CD8-positive, alpha-beta T cell (primary cell): ENCODE measurements at regions of chr6 and their contacts with region 1.

Region 1: DNA sequence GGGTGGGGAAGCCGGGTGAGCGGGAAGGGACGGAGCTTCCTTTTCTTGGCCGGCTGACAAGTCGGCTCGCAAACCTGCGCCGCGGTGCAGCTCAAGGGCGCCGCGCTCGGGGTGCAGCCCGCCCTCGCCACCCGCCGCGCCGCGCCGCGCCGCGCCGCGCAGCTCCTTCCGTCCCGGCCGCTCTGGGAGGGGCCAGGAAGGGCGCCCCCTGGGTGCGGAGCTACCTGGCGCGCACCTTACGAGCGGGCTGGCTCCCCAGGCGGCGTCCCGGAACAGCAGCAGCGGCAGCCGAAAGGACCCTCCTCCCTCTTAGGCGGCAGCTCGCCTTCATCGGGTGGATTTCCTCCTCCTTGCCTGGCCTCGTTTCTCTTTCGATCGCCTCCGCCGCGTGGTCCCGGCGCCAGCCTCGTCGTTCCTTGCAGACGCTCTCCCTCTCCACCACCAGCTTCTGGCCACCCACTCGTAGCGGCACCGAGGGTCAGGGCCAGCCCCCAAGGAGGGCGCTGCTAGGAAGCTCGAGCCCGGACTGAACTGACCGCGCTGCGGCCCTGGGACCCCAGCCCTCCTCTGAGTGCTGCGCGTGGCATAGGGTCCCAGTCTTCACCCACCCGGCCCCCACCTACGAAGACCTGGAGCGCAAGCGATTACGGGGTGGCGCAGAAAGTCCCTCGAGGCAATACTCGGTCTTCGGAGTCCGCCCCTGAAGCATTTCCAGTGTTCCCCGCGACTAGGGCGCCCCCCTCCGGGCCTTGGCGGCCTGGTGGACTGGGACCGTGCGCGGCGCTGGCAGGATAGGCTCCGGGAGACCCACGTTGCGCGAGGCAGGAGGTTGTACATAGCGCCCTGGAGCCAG is at the start of gene MAP3K5:
- DNase-seq: peak; percentile 92 to 98 (median 95)
- ATAC-seq: peak; percentile 80
- H3K4me3 ChIP-seq: peak within 1 kb of the TSS; percentile 98 to 99
- H3K4me3 Mint-ChIP-seq: peak within 1 kb of the TSS; percentile 94
- H3K27ac ChIP-seq: peak within 1 kb of the TSS; percentile 92 to 96
- H3K27ac Mint-ChIP-seq: peak within 1 kb of the TSS; percentile 96
- H3K4me1 ChIP-seq: peaks cover 36% of the 10 kb centered on the region
- H3K4me1 Mint-ChIP-seq: peaks cover 39% of the 10 kb centered on the region
- H3K27me3 ChIP-seq: no peaks in the 10 kb centered on the region
- H3K27me3 Mint-ChIP-seq: no peaks in the 10 kb centered on the region
- CTCF ChIP-seq: peak; percentile 72
- total RNA-seq, gene MAP3K5: 11.1 to 11.3 TPM

Region 2: GRCh38 chr6:135105710-135106109 is 1686.9 kb before region 1 on chr6:
- CTCF ChIA-PET with region 1: no interaction called
- POLR2A ChIA-PET with region 1: no interaction called
- intact Hi-C with region 1: no loop called
- DNase-seq: no peak
- ATAC-seq: no peak
- H3K4me3 ChIP-seq: no peak overlapping the region
- H3K4me3 Mint-ChIP-seq: no peak overlapping the region
- H3K27ac ChIP-seq: no peak overlapping the region
- H3K27ac Mint-ChIP-seq: peak overlapping the region; percentile 86
- H3K4me1 ChIP-seq: peaks cover 39% of the 10 kb centered on the region
- H3K4me1 Mint-ChIP-seq: peaks cover 64% of the 10 kb centered on the region
- H3K27me3 ChIP-seq: no peaks in the 10 kb centered on the region
- H3K27me3 Mint-ChIP-seq: no peaks in the 10 kb centered on the region
- CTCF ChIP-seq: no peak

Region 3: GRCh38 chr6:135497412-135498269 is 1295.0 kb before region 1 on chr6 and contains the start of gene AHI1:
- CTCF ChIA-PET with region 1: no interaction called
- POLR2A ChIA-PET with region 1: interaction called, 4 read pairs
- intact Hi-C with region 1: loop called in 1 of 2 experiments (anchors 5 kb)
- DNase-seq: peak; percentile 81 to 95 (median 86)
- ATAC-seq: peak; percentile 72
- H3K4me3 ChIP-seq: peak within 1 kb of the TSS; percentile 87 to 95
- H3K4me3 Mint-ChIP-seq: no peak within 1 kb of the TSS
- H3K27ac ChIP-seq: peak within 1 kb of the TSS; percentile 91 to 98
- H3K27ac Mint-ChIP-seq: no peak within 1 kb of the TSS
- H3K4me1 ChIP-seq: peaks cover 6% of the 10 kb centered on the region
- H3K4me1 Mint-ChIP-seq: peaks cover 8% of the 10 kb centered on the region
- H3K27me3 ChIP-seq: no peaks in the 10 kb centered on the region
- H3K27me3 Mint-ChIP-seq: no peaks in the 10 kb centered on the region
- CTCF ChIP-seq: no peak
- total RNA-seq, gene AHI1: 16.0 to 17.9 TPM

Region 4: DNA sequence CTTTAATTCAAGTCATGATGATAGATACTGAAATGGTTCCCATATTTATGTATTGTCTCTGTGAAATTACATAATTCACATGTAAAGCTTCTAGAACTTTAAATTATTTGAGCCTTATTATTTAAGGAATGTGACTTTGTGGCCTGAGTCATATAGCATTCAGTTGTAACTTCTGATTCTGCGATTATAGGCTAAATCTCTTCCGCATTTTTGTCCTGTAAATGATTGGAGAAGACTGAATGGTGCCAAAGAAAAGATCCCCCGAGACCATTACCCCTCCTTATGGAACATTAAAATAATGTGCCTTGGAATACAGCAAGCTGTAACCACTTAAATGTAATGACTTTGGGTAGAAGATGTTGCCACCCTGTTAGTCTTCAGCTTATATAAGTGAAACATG is 179.2 kb before region 1 on chr6:
- CTCF ChIA-PET with region 1: interaction called, 12 read pairs
- POLR2A ChIA-PET with region 1: no interaction called
- intact Hi-C with region 1: loop called (anchors 1 kb)
- DNase-seq: no peak
- ATAC-seq: no peak
- H3K4me3 ChIP-seq: no peak overlapping the region
- H3K4me3 Mint-ChIP-seq: no peak overlapping the region
- H3K27ac ChIP-seq: no peak overlapping the region
- H3K27ac Mint-ChIP-seq: no peak overlapping the region
- H3K4me1 ChIP-seq: no peaks in the 10 kb centered on the region
- H3K4me1 Mint-ChIP-seq: no peaks in the 10 kb centered on the region
- H3K27me3 ChIP-seq: no peaks in the 10 kb centered on the region
- H3K27me3 Mint-ChIP-seq: no peaks in the 10 kb centered on the region
- CTCF ChIP-seq: no peak

Region 5: DNA sequence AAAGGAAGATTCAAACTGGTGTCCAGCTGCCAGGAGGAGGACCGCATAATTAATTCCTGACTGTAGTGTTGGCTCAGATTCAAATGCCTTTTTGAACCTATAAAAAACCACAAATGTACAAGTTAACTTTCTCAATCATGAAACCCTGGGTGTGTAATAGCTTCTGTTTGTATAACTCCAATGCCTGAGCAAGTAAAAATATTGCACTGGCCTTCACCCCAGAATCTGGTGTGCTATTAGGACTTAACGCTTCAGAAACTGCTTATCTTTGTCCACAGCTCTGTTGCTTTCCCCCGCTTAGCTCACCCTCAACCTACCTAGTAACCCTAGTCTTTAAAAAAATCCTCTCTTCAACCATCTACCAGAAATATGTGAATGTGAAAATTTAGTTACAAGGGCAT is 123.3 kb before region 1 on chr6:
- CTCF ChIA-PET with region 1: interaction called, 13 read pairs
- POLR2A ChIA-PET with region 1: interaction called, 5 read pairs
- intact Hi-C with region 1: no loop called
- DNase-seq: no peak
- ATAC-seq: no peak
- H3K4me3 ChIP-seq: no peak overlapping the region
- H3K4me3 Mint-ChIP-seq: no peak overlapping the region
- H3K27ac ChIP-seq: no peak overlapping the region
- H3K27ac Mint-ChIP-seq: no peak overlapping the region
- H3K4me1 ChIP-seq: no peaks in the 10 kb centered on the region
- H3K4me1 Mint-ChIP-seq: no peaks in the 10 kb centered on the region
- H3K27me3 ChIP-seq: no peaks in the 10 kb centered on the region
- H3K27me3 Mint-ChIP-seq: no peaks in the 10 kb centered on the region
- CTCF ChIP-seq: no peak

Region 6: DNA sequence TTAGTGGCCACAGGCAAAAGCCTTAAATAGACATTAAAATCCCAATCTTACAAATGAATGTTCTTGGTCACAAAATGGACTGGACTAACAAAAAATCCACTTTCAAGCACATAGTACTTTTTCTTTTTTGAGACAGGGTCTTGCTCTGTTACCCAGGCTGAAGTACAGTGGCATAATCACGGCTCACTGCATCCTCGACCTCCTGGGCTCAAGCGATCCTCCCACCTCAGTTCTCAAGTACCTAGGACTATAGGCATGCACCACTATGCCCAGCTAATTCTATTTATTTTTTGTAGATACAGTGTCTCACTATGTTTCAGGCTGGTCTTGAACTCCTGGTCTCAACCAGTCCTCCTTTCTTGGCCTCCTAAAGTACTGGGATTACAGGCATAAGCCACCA is 59.7 kb before region 1 on chr6:
- CTCF ChIA-PET with region 1: interaction called, 63 read pairs
- POLR2A ChIA-PET with region 1: interaction called, 29 read pairs
- intact Hi-C with region 1: no loop called
- DNase-seq: no peak
- ATAC-seq: no peak
- H3K4me3 ChIP-seq: no peak overlapping the region
- H3K4me3 Mint-ChIP-seq: no peak overlapping the region
- H3K27ac ChIP-seq: no peak overlapping the region
- H3K27ac Mint-ChIP-seq: no peak overlapping the region
- H3K4me1 ChIP-seq: no peaks in the 10 kb centered on the region
- H3K4me1 Mint-ChIP-seq: peaks cover 33% of the 10 kb centered on the region
- H3K27me3 ChIP-seq: no peaks in the 10 kb centered on the region
- H3K27me3 Mint-ChIP-seq: no peaks in the 10 kb centered on the region
- CTCF ChIP-seq: no peak

Region 7: GRCh38 chr6:136761227-136761922 is 31.3 kb before region 1 on chr6:
- CTCF ChIA-PET with region 1: interaction called, 71 read pairs
- POLR2A ChIA-PET with region 1: interaction called, 71 read pairs
- intact Hi-C with region 1: loop called in 1 of 2 experiments (anchors 1 kb)
- DNase-seq: peak in 6 of 9 experiments; percentile 10 to 60 (median 39)
- ATAC-seq: peak; percentile 51
- H3K4me3 ChIP-seq: peak overlapping the region in 1 of 2 experiments; percentile 27
- H3K4me3 Mint-ChIP-seq: peak overlapping the region; percentile 78
- H3K27ac ChIP-seq: peak overlapping the region in 1 of 2 experiments; percentile 69
- H3K27ac Mint-ChIP-seq: peak overlapping the region; percentile 93
- H3K4me1 ChIP-seq: peaks cover 46% of the 10 kb centered on the region
- H3K4me1 Mint-ChIP-seq: peaks cover 66% of the 10 kb centered on the region
- H3K27me3 ChIP-seq: no peaks in the 10 kb centered on the region
- H3K27me3 Mint-ChIP-seq: no peaks in the 10 kb centered on the region
- CTCF ChIP-seq: no peak

Region 8: GRCh38 chr6:137025786-137026456 is 233.3 kb after region 1 on chr6:
- CTCF ChIA-PET with region 1: no interaction called
- POLR2A ChIA-PET with region 1: no interaction called
- intact Hi-C with region 1: no loop called
- DNase-seq: peak in 1 of 9 experiments; percentile 12
- ATAC-seq: no peak
- H3K4me3 ChIP-seq: no peak overlapping the region
- H3K4me3 Mint-ChIP-seq: no peak overlapping the region
- H3K27ac ChIP-seq: no peak overlapping the region
- H3K27ac Mint-ChIP-seq: no peak overlapping the region
- H3K4me1 ChIP-seq: no peaks in the 10 kb centered on the region
- H3K4me1 Mint-ChIP-seq: no peaks in the 10 kb centered on the region
- H3K27me3 ChIP-seq: peaks cover 0 to 7% of the 10 kb centered on the region in 2 experiments
- H3K27me3 Mint-ChIP-seq: peaks cover 46% of the 10 kb centered on the region
- CTCF ChIP-seq: no peak

Region 9: GRCh38 chr6:137823826-137824555 is 1031.4 kb after region 1 on chr6:
- CTCF ChIA-PET with region 1: no interaction called
- POLR2A ChIA-PET with region 1: no interaction called
- intact Hi-C with region 1: loop called in 1 of 2 experiments (anchors 2 kb)
- DNase-seq: peak; percentile 54 to 98 (median 82)
- ATAC-seq: peak; percentile 71
- H3K4me3 ChIP-seq: peak overlapping the region; percentile 1 to 39
- H3K4me3 Mint-ChIP-seq: peak overlapping the region; percentile 59
- H3K27ac ChIP-seq: peak overlapping the region; percentile 91 to 99
- H3K27ac Mint-ChIP-seq: peak overlapping the region; percentile 97
- H3K4me1 ChIP-seq: peaks cover 75% of the 10 kb centered on the region
- H3K4me1 Mint-ChIP-seq: peaks cover 74% of the 10 kb centered on the region
- H3K27me3 ChIP-seq: no peaks in the 10 kb centered on the region
- H3K27me3 Mint-ChIP-seq: no peaks in the 10 kb centered on the region
- CTCF ChIP-seq: no peak